ENCODE measurements at regions of chr12 and their contacts with region 1.

Region 1: GRCh38 chr12:123032736-123033391 is 52.4 kb downstream of the ARL6IP4 start:
- DNase-seq: peak in 2 of 3 donors; percentile 2 to 28
- H3K4me3 ChIP-seq: peak overlapping the region in 1 of 7 experiments; percentile 19
- H3K27ac ChIP-seq: no peak overlapping the region
- H3K4me1 ChIP-seq: peaks cover 8 to 86% (median 76%) of the 10 kb centered on the region in 4 experiments
- H3K27me3 ChIP-seq: no peaks in the 10 kb centered on the region

Region 2: GRCh38 chr12:122834104-122834920 is 198.6 kb before region 1 on chr12:
- CTCF ChIA-PET with region 1: no interaction called
- POLR2A ChIA-PET with region 1: no interaction called
- DNase-seq: peak; percentile 31 to 73 (median 65)
- H3K4me3 ChIP-seq: peak overlapping the region in 6 of 7 experiments; percentile 56 to 93 (median 83)
- H3K27ac ChIP-seq: no peak overlapping the region
- H3K4me1 ChIP-seq: peaks cover 4 to 24% (median 11%) of the 10 kb centered on the region in 4 experiments
- H3K27me3 ChIP-seq: no peaks in the 10 kb centered on the region

Region 3: GRCh38 chr12:123021688-123022604 is 10.9 kb before region 1 on chr12:
- CTCF ChIA-PET with region 1: interaction called, 17 read pairs
- POLR2A ChIA-PET with region 1: no interaction called
- DNase-seq: no peak
- H3K4me3 ChIP-seq: no peak overlapping the region
- H3K27ac ChIP-seq: no peak overlapping the region
- H3K4me1 ChIP-seq: peaks cover 0 to 7% (median under 1%) of the 10 kb centered on the region in 4 experiments
- H3K27me3 ChIP-seq: no peaks in the 10 kb centered on the region

Measured in common myeloid progenitor, CD34-positive (primary cell).